ENCODE measurements at regions of chr11 and their contacts with region 1.

Region 1: GRCh38 chr11:88543902-88544655 is 206.5 kb upstream of the CTSC start:
- DNase-seq: no peak
- H3K4me3 ChIP-seq: peak overlapping the region in 1 of 3 experiments; percentile 4
- H3K27ac ChIP-seq: peak overlapping the region; percentile 34
- H3K4me1 ChIP-seq: peaks cover 7% of the 10 kb centered on the region
- H3K27me3 ChIP-seq: no peaks in the 10 kb centered on the region
- CTCF ChIP-seq: peak; percentile 94 to 99 (median 99)

Region 2: GRCh38 chr11:88016392-88017170 is 527.5 kb before region 1 on chr11:
- dilution Hi-C with region 1: loop called (anchors 25 kb)
- DNase-seq: peak; percentile 59
- H3K4me3 ChIP-seq: no peak overlapping the region
- H3K27ac ChIP-seq: no peak overlapping the region
- H3K4me1 ChIP-seq: no peaks in the 10 kb centered on the region
- H3K27me3 ChIP-seq: no peaks in the 10 kb centered on the region
- CTCF ChIP-seq: peak; percentile 56 to 79 (median 77)

Region 3: DNA sequence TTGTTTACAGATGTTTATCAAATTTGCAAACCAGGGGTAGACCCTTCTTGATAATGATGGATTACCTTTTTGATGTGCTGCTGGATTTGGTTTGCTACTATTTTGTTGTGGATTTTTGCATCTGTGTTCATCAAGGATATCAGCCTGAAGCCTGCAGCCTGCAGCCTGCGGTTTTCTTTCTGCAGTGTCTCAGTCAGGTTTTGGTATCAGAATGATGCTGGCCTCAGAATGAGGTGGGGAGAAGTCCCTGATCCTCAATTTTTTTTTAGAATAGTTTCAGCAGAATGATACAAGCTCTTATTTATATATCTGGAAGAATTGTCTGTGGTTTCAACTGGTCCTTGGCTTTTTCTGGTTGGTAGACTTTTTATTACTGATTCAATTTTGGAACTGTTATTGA is 349.1 kb before region 1 on chr11:
- dilution Hi-C with region 1: no loop called
- DNase-seq: no peak
- H3K4me3 ChIP-seq: no peak overlapping the region
- H3K27ac ChIP-seq: no peak overlapping the region
- H3K4me1 ChIP-seq: no peaks in the 10 kb centered on the region
- H3K27me3 ChIP-seq: no peaks in the 10 kb centered on the region
- CTCF ChIP-seq: no peak

Region 4: DNA sequence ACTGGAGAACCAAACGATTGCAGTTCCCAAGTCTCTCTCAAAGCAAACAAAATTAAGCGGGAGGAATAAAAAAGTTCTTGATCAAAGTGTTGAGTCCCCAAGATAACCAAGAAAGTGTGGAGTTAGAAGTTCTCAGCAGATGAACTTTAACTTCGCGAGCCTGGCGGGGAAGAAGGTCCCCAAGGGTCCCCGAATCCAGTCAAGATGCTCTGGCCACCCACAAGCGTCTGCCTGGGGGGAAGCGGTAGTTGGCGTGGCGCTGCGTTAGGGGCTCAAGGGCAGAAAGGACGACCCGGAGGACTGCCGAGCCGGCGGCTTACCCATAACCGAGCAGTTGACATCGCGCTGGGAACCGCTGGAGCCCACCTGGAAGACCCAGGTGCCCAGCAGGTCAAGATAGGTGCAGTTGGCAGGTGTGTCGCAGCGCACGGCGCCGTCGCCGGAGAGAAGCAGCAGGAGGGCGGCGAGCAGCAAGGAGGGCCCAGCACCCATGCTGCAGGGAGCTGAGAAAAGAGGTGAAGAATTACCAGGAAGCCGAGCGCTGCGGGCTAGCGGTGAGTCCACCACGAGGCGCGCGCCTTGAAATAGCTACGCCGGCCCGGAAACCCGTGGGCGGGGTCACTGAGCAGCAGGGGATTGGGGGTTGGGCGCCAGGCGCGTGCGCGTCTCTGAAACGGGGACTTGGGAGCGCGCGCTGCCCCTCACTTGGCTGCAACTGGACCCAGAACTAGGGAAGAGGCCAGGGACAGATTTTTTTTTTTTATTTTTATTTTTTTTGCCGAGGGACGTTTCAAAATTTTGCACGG is 206.7 kb before region 1 on chr11 and contains the start of gene CTSC:
- dilution Hi-C with region 1: loop called (anchors 25 kb)
- DNase-seq: no peak
- H3K4me3 ChIP-seq: peak within 1 kb of the TSS; percentile 86 to 97 (median 91)
- H3K27ac ChIP-seq: peak within 1 kb of the TSS; percentile 87
- H3K4me1 ChIP-seq: peaks cover 36% of the 10 kb centered on the region
- H3K27me3 ChIP-seq: no peaks in the 10 kb centered on the region
- CTCF ChIP-seq: peak in 1 of 3 experiments; percentile 15
- polyA plus RNA-seq, gene CTSC: 540 to 659 TPM (median 658 TPM) in 3 replicates